ENCODE measurements at regions of chr3 and their contacts with region 1.

Region 1: GRCh38 chr3:99313485-99313884 is 324.9 kb upstream of the COL8A1 start:
- DNase-seq: peak in 1 of 2 experiments; percentile 15
- H3K4me3 ChIP-seq: no peak overlapping the region
- H3K27ac ChIP-seq: no peak overlapping the region
- H3K4me1 ChIP-seq: no peaks in the 10 kb centered on the region
- H3K27me3 ChIP-seq: no peaks in the 10 kb centered on the region
- CTCF ChIP-seq: no peak

Region 2: DNA sequence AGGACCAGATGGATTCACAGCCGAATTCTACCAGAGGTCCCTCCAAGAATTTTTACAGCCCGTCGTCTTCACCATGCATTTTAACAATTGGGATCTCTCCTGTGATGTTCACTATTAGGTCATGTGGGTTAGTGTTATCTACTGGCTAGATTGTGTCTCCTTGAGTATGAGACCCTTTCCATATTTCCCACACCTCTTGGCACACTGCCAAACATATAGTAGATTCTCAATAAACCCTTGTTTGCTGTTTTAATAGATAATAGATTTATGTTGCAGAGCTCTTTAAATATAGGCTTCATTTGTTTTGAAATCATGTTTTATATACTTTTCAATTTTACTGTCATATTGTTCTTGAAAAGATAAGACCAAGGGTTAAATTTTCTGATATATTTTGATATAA is 1261.0 kb after region 1 on chr3:
- CTCF ChIA-PET with region 1: no interaction called
- POLR2A ChIA-PET with region 1: interaction called, 13 read pairs
- intact Hi-C with region 1: no loop called
- DNase-seq: no peak
- H3K4me3 ChIP-seq: no peak overlapping the region
- H3K27ac ChIP-seq: no peak overlapping the region
- H3K4me1 ChIP-seq: no peaks in the 10 kb centered on the region
- H3K27me3 ChIP-seq: no peaks in the 10 kb centered on the region
- CTCF ChIP-seq: no peak